Mammary epithelial cell (primary cell): ENCODE measurements at regions of chr6 and their contacts with region 1.

Region 1: DNA sequence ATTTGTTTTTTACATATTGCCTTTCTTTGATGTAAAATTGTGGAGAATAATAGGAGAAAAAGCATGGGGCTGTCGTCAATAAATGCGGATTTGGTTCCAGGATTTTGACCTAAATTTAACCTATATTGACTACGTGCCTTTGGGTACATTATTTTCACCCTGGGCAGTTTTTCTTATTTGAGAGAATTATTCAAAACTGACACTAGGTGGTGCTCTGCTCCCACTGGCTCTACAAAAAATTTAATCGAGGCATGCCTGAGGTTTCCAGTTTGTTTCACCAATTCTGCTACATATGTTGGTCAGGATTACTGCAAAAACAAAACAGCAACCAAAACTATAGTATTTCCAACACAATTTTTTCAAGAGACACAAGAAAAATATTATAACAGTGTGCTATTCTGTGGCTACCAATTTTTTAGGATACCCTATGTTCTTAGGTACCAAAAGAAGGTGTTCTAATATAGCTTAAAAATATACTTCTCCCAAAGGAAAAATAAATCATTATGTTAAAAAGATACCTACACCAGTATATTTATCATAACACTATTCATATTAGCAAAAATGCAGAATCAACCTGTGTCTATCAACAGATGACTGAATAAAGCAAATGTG is 48.6 kb upstream of the FABP7 start:
- DNase-seq: peak; percentile 29
- H3K4me3 ChIP-seq: no peak overlapping the region
- H3K27ac ChIP-seq: no peak overlapping the region
- H3K4me1 ChIP-seq: peaks cover 9% of the 10 kb centered on the region
- H3K27me3 ChIP-seq: no peaks in the 10 kb centered on the region
- CTCF ChIP-seq: peak; percentile 63 to 76

Region 2: GRCh38 chr6:122471107-122472021 is 259.5 kb before region 1 on chr6 and contains the start of gene SERINC1:
- CTCF ChIA-PET with region 1: no interaction called
- dilution Hi-C with region 1: no loop called
- in situ Hi-C with region 1: no loop called
- intact Hi-C with region 1: loop called (anchors 5 kb)
- DNase-seq: peak; percentile 90
- H3K4me3 ChIP-seq: peak within 1 kb of the TSS; percentile 59 to 93 (median 68)
- H3K27ac ChIP-seq: peak within 1 kb of the TSS; percentile 95
- H3K4me1 ChIP-seq: peaks cover 5% of the 10 kb centered on the region
- H3K27me3 ChIP-seq: no peaks in the 10 kb centered on the region
- CTCF ChIP-seq: no peak
- total RNA-seq, gene SERINC1: 97.6 to 153 TPM

Region 3: GRCh38 chr6:122530440-122531046 is 200.3 kb before region 1 on chr6:
- CTCF ChIA-PET with region 1: interaction called, 4 read pairs
- dilution Hi-C with region 1: no loop called
- in situ Hi-C with region 1: no loop called
- intact Hi-C with region 1: loop called (anchors 2 kb)
- DNase-seq: peak; percentile 62
- H3K4me3 ChIP-seq: no peak overlapping the region
- H3K27ac ChIP-seq: no peak overlapping the region
- H3K4me1 ChIP-seq: no peaks in the 10 kb centered on the region
- H3K27me3 ChIP-seq: peaks cover 5% of the 10 kb centered on the region
- CTCF ChIP-seq: peak; percentile 97 to 99

Region 4: DNA sequence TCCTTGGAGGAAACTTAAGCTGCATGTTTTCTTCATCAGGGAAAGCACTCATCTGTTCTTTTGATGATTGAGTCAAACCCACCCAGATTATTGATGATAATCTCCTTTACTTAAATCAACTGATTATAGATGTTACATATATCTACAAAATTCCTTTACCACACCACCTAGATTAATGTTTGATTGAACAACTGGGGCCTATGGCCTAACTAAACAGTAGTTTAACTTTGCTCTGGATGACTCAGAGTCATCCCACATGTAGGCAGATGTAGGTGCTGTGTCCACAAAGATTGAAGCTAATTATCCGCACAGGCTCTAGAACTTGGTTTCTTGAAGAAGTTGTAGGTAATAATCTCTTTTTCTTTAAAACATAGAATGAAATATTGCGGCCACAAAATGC is 78.5 kb before region 1 on chr6:
- CTCF ChIA-PET with region 1: no interaction called
- dilution Hi-C with region 1: no loop called
- in situ Hi-C with region 1: no loop called
- intact Hi-C with region 1: no loop called
- DNase-seq: peak; percentile 58
- H3K4me3 ChIP-seq: no peak overlapping the region
- H3K27ac ChIP-seq: peak overlapping the region; percentile 47
- H3K4me1 ChIP-seq: peaks cover 58% of the 10 kb centered on the region
- H3K27me3 ChIP-seq: no peaks in the 10 kb centered on the region
- CTCF ChIP-seq: no peak

Region 5: DNA sequence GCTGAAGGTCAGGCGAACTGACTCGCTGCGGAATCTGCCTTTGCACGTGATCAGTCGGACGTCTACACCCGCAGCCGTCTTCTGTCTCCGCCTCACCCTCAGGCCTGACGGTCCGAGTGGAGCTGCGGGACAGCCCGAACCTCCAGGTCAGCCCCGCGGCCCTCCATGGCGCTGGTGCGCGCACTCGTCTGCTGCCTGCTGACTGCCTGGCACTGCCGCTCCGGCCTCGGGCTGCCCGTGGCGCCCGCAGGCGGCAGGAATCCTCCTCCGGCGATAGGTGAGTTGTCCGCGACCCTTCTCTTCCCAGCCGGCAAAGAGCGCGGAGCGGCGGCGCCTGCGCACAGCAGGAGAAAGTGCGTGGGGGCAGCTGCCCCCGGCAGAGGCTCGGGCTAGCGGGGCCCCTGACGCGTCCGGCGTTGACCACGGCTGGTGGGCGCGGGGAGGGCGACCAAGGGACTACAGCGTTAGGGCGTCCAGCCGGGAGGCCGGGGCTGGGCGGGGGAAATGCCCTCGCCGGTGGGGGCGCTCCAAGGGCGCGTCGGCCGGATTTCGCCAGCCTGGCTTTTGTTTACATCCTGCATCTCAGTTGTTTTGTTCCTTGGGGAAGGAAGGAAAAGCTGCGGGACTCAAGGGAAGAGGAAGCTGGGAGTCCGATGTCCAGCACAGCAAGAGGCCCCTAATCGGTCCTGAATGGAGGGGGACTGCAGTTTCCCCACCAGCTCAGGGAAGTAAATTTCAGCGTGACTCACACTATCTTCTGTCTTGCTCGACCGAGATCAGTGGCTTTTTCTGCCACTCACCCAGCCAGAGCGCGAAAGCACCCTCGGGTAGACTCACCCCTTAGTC is 58.5 kb after region 1 on chr6 and contains the start of gene SMPDL3A:
- CTCF ChIA-PET with region 1: no interaction called
- dilution Hi-C with region 1: no loop called
- in situ Hi-C with region 1: no loop called
- intact Hi-C with region 1: loop called (anchors 1 kb)
- DNase-seq: peak; percentile 74
- H3K4me3 ChIP-seq: peak within 1 kb of the TSS; percentile 61 to 71 (median 68)
- H3K27ac ChIP-seq: peak within 1 kb of the TSS; percentile 63
- H3K4me1 ChIP-seq: peaks cover 19% of the 10 kb centered on the region
- H3K27me3 ChIP-seq: no peaks in the 10 kb centered on the region
- CTCF ChIP-seq: peak; percentile 10 to 49
- total RNA-seq, gene SMPDL3A: 4.5 to 7.3 TPM

Region 6: DNA sequence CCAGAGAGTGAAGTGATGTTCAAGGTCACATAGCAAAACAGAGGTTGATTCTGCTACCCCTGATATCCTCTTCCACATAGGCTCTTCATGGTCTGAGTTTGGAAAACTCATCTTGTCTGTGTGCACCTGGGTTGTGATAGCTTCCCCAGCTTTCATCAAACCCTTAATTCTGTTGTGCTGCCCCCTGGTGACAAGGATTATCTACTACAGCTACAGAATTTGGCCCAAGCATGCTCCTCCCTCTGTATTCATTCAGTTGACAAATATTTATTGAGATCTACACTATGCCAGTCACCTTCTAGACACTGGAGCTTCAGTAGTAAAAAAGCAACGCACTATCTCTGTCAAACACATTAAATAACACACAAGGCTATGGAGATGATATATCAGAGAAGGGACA is 108.6 kb after region 1 on chr6:
- CTCF ChIA-PET with region 1: interaction called, 20 read pairs
- dilution Hi-C with region 1: no loop called
- in situ Hi-C with region 1: loop called in 1 of 2 experiments (anchors 5 kb)
- intact Hi-C with region 1: loop called (anchors 1 kb)
- DNase-seq: peak; percentile 48
- H3K4me3 ChIP-seq: no peak overlapping the region
- H3K27ac ChIP-seq: no peak overlapping the region
- H3K4me1 ChIP-seq: no peaks in the 10 kb centered on the region
- H3K27me3 ChIP-seq: no peaks in the 10 kb centered on the region
- CTCF ChIP-seq: peak; percentile 61 to 71